Upper lobe of right lung (tissue), 1 donor: ENCODE measurements at regions of chr12 and their contacts with region 1.

Region 1: DNA sequence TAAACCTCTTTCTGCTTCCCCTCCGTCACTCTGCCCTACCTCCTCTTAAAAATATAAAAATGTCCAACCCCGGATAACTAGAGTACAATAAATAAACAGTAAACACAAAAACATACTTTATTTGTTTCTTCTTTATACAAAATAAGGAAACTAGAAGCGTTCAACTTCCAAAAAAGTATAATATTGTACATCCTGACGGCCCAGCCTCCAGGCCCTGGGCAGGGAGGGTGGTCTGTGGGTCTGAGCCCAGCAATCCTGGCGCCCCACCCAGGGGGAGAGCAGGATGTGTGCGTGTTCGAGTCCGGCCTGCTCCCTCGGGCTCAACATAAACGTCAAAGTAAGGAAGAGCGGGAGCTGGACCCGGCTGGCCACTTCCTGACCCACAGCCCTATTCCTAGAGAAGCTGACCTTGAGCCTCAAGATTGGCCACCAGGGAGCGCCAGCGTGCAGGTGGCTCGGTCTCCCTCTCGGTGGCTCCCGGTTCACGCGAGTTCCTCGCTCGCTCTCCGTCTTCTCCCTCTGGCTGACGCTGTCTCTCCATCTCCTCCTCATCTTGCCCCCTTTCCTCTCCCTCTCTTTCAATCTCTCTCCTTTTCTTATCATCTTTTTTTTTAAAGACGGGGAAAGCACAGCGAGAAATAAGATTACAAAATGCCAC is 9.4 kb downstream of the LHX5 start:
- DNase-seq: peak; percentile 89
- ATAC-seq: peak; percentile 90
- H3K4me3 ChIP-seq: no peak overlapping the region
- H3K27ac ChIP-seq: no peak overlapping the region
- H3K4me1 ChIP-seq: peaks cover 31% of the 10 kb centered on the region
- H3K27me3 ChIP-seq: peaks cover 89% of the 10 kb centered on the region
- CTCF ChIP-seq: peak; percentile 86

Region 2: GRCh38 chr12:113358381-113359132 is 103.7 kb before region 1 on chr12 and contains the start of gene PLBD2:
- intact Hi-C with region 1: no loop called
- DNase-seq: peak; percentile 97
- ATAC-seq: peak; percentile 98
- H3K4me3 ChIP-seq: peak within 1 kb of the TSS; percentile 87
- H3K27ac ChIP-seq: peak within 1 kb of the TSS; percentile 80
- H3K4me1 ChIP-seq: peaks cover 13% of the 10 kb centered on the region
- H3K27me3 ChIP-seq: no peaks in the 10 kb centered on the region
- CTCF ChIP-seq: no peak
- total RNA-seq, gene PLBD2: 41.0 TPM

Region 3: GRCh38 chr12:113912760-113913329 is 450.6 kb after region 1 on chr12:
- intact Hi-C with region 1: loop called (anchors 10 kb)
- DNase-seq: peak; percentile 73
- ATAC-seq: peak; percentile 74
- H3K4me3 ChIP-seq: no peak overlapping the region
- H3K27ac ChIP-seq: no peak overlapping the region
- H3K4me1 ChIP-seq: no peaks in the 10 kb centered on the region
- H3K27me3 ChIP-seq: no peaks in the 10 kb centered on the region
- CTCF ChIP-seq: peak; percentile 78